HepG2 (cell line): ENCODE measurements at regions of chr9 and their contacts with region 1.

Region 1: GRCh38 chr9:136439550-136440408 is at the start of gene INPP5E:
- DNase-seq: peak; percentile 16
- ATAC-seq: peak; percentile 74
- H3K4me3 ChIP-seq: peak within 1 kb of the TSS; percentile 89 to 92 (median 89)
- H3K27ac ChIP-seq: peak within 1 kb of the TSS; percentile 59
- H3K4me1 ChIP-seq: peaks cover 46% of the 10 kb centered on the region
- H3K27me3 ChIP-seq: no peaks in the 10 kb centered on the region; a peak in 1 of 5 replicates
- CTCF ChIP-seq: peak; percentile 70
- EP300 ChIP-seq: no peak
- POLR2A ChIP-seq: peak in 1 of 2 experiments; percentile 54; a peak in 2 of 4 replicates
- RAD21 ChIP-seq: peak; percentile 8; the same call in 1 of the 2 replicates
- total RNA-seq, gene INPP5E: 3.0 and 5.5 TPM in 2 replicates

Region 2: DNA sequence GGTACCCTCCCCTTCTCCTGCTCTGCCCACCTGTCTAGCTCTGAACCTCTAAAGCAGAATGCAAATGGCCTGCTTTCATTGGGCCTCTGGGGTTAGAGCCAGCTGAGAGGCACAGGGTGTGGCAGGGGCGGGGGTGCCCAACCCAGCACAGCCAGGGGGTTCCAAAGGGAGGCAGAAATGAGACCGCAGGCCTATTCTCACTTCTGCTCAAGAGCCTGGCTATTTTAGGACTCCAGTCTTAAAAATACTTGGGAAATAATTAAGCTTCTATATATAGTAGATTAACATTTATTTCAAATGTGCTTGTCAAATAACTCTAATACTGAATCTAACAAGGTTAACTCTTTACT is 199.8 kb before region 1 on chr9:
- CTCF ChIA-PET with region 1: no interaction called
- POLR2A ChIA-PET with region 1: no interaction called
- in situ Hi-C with region 1: no loop called
- intact Hi-C with region 1: no loop called
- DNase-seq: no peak
- ATAC-seq: no peak
- H3K4me3 ChIP-seq: no peak overlapping the region
- H3K27ac ChIP-seq: no peak overlapping the region
- H3K4me1 ChIP-seq: peaks cover 56% of the 10 kb centered on the region
- H3K27me3 ChIP-seq: no peaks in the 10 kb centered on the region; a peak in 1 of 5 replicates
- CTCF ChIP-seq: no peak
- EP300 ChIP-seq: no peak
- POLR2A ChIP-seq: no peak
- RAD21 ChIP-seq: no peak

Region 3: GRCh38 chr9:136474974-136475865 is 35.4 kb after region 1 on chr9:
- CTCF ChIA-PET with region 1: no interaction called
- POLR2A ChIA-PET with region 1: no interaction called
- in situ Hi-C with region 1: loop called (anchors 5 kb)
- intact Hi-C with region 1: no loop called
- DNase-seq: no peak
- ATAC-seq: no peak
- H3K4me3 ChIP-seq: no peak overlapping the region
- H3K27ac ChIP-seq: no peak overlapping the region
- H3K4me1 ChIP-seq: peaks cover 4% of the 10 kb centered on the region; the same call in 1 of the 2 replicates
- H3K27me3 ChIP-seq: no peaks in the 10 kb centered on the region
- CTCF ChIP-seq: no peak
- EP300 ChIP-seq: no peak
- POLR2A ChIP-seq: no peak
- RAD21 ChIP-seq: no peak